ENCODE measurements at regions of chr1 and their contacts with region 1.

Region 1: DNA sequence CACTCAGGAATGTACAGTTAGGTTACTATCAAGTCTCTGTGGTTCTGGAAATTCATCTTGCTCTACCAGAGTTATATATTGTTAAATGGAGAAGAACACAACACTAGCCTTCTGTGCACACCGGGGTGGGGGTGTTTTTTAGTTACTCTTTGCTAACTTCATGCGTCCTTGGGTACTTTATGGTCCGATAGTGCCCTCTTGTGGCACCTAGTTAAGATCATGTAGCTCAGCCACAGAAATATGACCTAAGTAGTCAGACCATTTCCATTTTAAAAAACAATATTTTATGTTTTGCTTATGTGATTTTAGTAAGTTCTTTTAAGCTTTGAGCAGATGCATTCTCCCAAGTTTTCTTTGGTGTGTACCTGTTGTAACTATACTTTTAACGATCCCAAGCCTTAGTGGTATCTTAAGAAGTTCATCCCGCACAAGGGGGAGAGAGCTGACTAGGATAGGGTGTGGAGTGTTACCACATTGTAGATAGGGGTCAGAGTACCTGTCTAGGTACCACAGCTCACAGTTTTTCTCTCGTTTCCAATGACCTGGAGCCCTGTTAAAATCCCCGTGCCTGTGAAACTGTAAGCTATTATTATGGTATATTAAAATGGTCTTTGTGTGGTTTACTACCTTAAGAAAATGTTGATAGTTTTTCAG is 20.6 kb upstream of the SH3D21 start:
- DNase-seq: peak; percentile 82
- ATAC-seq: peak; percentile 94
- H3K4me3 Mint-ChIP-seq: no peak overlapping the region
- H3K27ac Mint-ChIP-seq: peak overlapping the region; percentile 15
- H3K4me1 Mint-ChIP-seq: peaks cover 22% of the 10 kb centered on the region
- H3K27me3 Mint-ChIP-seq: no peaks in the 10 kb centered on the region

Region 2: DNA sequence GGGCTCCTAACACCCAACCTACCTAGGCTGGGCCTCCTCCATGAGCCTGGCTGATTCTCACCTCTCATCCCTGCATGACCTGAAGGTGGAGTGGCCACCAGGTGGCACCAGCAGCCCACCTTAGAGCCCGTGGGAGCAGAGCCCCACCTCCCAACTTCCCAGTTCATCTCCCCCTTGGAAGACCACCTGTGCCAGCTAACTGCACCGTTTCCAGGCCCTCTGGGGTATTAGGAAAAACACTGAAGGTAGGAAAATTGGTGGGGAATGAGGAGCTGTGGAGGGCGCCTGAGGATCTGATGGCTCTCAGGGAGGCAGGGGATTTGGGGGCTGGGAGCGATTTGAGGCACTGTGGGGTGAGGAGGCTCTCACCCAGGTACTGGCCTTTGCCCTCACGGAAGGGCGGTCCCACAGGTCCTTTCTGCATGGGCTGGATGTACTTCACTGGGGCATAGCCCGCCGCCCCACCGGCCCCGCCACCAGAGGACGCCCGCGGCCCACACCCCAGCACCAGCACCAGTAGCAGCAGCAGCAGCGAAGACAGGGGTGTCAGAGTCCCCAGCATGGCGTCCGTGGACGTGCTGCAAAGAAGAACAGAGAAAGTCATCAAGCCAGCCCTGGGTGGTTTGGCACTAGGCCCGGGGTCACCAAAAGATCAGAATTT is 185.8 kb before region 1 on chr1:
- CTCF ChIA-PET with region 1: interaction called, 36 read pairs
- POLR2A ChIA-PET with region 1: interaction called, 3 read pairs
- DNase-seq: peak; percentile 83
- ATAC-seq: peak; percentile 93
- H3K4me3 Mint-ChIP-seq: no peak overlapping the region
- H3K27ac Mint-ChIP-seq: no peak overlapping the region
- H3K4me1 Mint-ChIP-seq: peaks cover 10% of the 10 kb centered on the region
- H3K27me3 Mint-ChIP-seq: no peaks in the 10 kb centered on the region

Region 3: GRCh38 chr1:36160949-36161485 is 124.6 kb before region 1 on chr1:
- CTCF ChIA-PET with region 1: interaction called, 13 read pairs
- POLR2A ChIA-PET with region 1: interaction called, 6 read pairs
- DNase-seq: peak; percentile 84
- ATAC-seq: peak; percentile 43
- H3K4me3 Mint-ChIP-seq: peak overlapping the region; percentile 72
- H3K27ac Mint-ChIP-seq: peak overlapping the region; percentile 89
- H3K4me1 Mint-ChIP-seq: peaks cover 68% of the 10 kb centered on the region
- H3K27me3 Mint-ChIP-seq: no peaks in the 10 kb centered on the region

Region 4: GRCh38 chr1:36223993-36224536 is 61.5 kb before region 1 on chr1 and contains the start of gene THRAP3:
- CTCF ChIA-PET with region 1: interaction called, 23 read pairs
- POLR2A ChIA-PET with region 1: no interaction called
- DNase-seq: peak; percentile 100
- ATAC-seq: peak; percentile 93
- H3K4me3 Mint-ChIP-seq: peak within 1 kb of the TSS; percentile 97
- H3K27ac Mint-ChIP-seq: peak within 1 kb of the TSS; percentile 100
- H3K4me1 Mint-ChIP-seq: peaks cover 32% of the 10 kb centered on the region
- H3K27me3 Mint-ChIP-seq: no peaks in the 10 kb centered on the region
- total RNA-seq, gene THRAP3: 136 to 140 TPM

Region 5: DNA sequence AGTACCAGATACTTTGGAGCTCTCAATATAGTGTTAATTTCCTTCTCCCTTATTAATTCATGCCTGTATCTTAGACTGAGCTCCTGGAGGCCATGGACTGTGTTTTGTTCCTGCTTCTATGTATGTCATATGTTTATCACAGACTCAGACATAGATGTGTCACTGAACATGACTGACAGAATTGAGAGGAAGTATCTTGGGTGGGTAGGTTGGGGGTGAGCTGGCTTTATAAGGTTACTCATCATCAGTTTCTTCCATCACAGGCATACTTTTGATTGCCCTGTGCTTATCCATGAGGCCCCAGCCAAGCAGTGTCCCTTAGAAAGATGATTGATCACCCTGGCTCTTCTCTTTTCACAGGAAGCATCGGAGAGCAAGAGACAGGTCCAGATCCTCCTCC is 15.0 kb after region 1 on chr1:
- CTCF ChIA-PET with region 1: interaction called, 24 read pairs
- POLR2A ChIA-PET with region 1: no interaction called
- DNase-seq: no peak
- ATAC-seq: no peak
- H3K4me3 Mint-ChIP-seq: no peak overlapping the region
- H3K27ac Mint-ChIP-seq: peak overlapping the region; percentile 12
- H3K4me1 Mint-ChIP-seq: peaks cover 7% of the 10 kb centered on the region
- H3K27me3 Mint-ChIP-seq: no peaks in the 10 kb centered on the region

Region 6: DNA sequence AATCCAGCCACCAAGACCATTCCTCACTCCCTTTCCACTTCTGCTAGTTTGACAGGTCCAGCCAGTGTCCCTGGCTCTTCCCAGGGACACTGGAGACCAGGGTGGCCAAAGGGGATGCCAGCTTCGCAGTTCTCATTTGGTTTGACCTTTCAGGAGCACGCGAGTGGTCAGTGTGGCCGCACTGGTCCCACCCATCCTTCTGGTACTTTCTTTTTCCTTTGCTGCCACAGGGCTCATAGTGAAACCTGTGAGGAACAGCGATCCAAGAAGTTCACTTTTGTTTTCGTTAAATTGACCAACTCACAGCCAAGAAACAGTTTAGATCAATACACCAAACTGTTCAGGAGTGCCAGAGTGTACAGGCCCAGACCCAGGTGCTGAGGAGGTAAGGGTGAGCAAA is 52.3 kb after region 1 on chr1:
- CTCF ChIA-PET with region 1: no interaction called
- POLR2A ChIA-PET with region 1: no interaction called
- DNase-seq: no peak
- ATAC-seq: no peak
- H3K4me3 Mint-ChIP-seq: no peak overlapping the region
- H3K27ac Mint-ChIP-seq: no peak overlapping the region
- H3K4me1 Mint-ChIP-seq: peaks cover 19% of the 10 kb centered on the region
- H3K27me3 Mint-ChIP-seq: no peaks in the 10 kb centered on the region

Region 7: DNA sequence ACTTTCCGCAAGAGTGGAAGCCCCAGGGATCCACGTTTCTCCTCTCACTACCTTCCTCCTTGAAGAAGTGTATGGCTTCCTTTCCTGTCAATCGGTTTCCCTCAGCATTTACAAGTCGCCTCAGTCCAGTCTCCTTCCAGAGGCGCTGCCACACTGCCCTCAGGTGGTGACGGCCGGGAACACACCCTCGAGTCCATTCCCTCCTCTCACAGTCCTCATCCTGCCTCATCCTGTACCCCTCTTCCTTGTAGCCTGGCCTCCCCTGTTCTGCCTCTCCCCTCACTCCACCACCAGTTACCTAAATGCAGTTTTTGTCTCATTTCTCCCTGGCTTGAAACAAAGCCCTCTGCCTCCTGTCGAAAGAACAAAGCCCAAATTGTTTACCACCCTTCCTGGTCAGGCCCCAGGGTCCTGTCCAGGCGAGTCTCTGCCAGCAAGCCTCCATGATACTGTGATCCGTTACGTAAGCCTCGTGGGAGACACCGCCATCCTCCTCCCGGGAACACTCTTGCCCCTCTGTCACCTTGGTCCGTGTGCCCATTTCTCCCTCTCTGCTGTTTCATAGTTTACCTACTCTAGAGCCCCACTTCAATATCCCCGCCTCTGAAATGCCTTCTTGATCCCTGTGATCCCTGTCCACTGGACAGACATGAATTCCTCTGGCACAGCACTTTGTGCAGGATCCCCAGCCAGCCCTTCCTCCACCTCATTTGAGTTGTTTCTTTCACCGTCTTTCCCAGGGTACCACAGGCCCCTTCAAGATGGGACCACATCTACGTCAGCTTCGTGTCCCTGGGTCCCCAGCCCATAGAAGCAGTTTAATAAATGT is 135.5 kb after region 1 on chr1:
- CTCF ChIA-PET with region 1: interaction called, 16 read pairs
- POLR2A ChIA-PET with region 1: interaction called, 4 read pairs
- DNase-seq: peak; percentile 94
- ATAC-seq: peak; percentile 98
- H3K4me3 Mint-ChIP-seq: peak overlapping the region; percentile 53
- H3K27ac Mint-ChIP-seq: peak overlapping the region; percentile 82
- H3K4me1 Mint-ChIP-seq: peaks cover 16% of the 10 kb centered on the region
- H3K27me3 Mint-ChIP-seq: no peaks in the 10 kb centered on the region